ENCODE measurements at regions of chr17 and their contacts with region 1.

Region 1: GRCh38 chr17:49997791-49998703 is 3.0 kb upstream of the DLX3 start:
- DNase-seq: peak; percentile 89
- ATAC-seq: peak; percentile 85
- H3K4me3 Mint-ChIP-seq: no peak overlapping the region
- H3K27ac Mint-ChIP-seq: no peak overlapping the region
- H3K4me1 Mint-ChIP-seq: peaks cover 22% of the 10 kb centered on the region
- H3K27me3 Mint-ChIP-seq: peaks cover 71% of the 10 kb centered on the region
- CTCF ChIP-seq: peak; percentile 95

Region 2: DNA sequence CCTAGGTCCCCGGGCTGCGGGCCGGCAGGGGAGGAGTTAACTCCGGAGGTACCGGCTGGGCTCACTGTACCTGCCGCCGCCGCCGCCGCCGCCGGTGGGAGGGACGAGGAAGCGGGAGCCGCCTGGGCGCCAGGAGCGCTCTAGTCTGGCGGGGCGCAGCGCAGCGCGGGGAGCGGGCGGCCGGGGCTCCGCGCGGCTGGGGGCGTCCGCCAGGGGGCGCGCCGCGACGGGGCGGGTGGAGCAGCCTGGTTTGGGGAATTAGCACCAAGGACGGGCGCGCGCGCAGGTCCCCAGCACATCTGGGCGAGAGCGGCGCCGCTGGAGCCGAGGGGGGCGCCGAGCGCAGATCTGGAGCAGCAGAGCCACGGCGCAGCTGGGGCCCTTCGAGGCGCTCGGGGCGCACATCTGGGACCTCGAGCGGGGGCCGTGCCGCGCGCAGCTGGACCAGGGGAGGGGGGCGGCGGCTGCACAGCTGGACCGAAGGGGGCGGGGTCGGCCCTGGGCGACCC is 422.4 kb before region 1 on chr17 and contains the start of gene NXPH3:
- CTCF ChIA-PET with region 1: interaction called, 23 read pairs
- POLR2A ChIA-PET with region 1: no interaction called
- intact Hi-C with region 1: loop called (anchors 10 kb)
- DNase-seq: peak; percentile 75
- ATAC-seq: peak; percentile 87
- H3K4me3 Mint-ChIP-seq: peak within 1 kb of the TSS; percentile 68
- H3K27ac Mint-ChIP-seq: no peak within 1 kb of the TSS
- H3K4me1 Mint-ChIP-seq: peaks cover 21% of the 10 kb centered on the region
- H3K27me3 Mint-ChIP-seq: peaks cover 50% of the 10 kb centered on the region
- CTCF ChIP-seq: peak; percentile 77
- total RNA-seq, gene NXPH3: 0.20 to 0.29 TPM

Region 3: GRCh38 chr17:49730078-49730784 is 267.8 kb before region 1 on chr17:
- CTCF ChIA-PET with region 1: no interaction called
- POLR2A ChIA-PET with region 1: no interaction called
- intact Hi-C with region 1: no loop called
- DNase-seq: no peak
- ATAC-seq: no peak
- H3K4me3 Mint-ChIP-seq: no peak overlapping the region
- H3K27ac Mint-ChIP-seq: peak overlapping the region; percentile 35
- H3K4me1 Mint-ChIP-seq: peaks cover 49% of the 10 kb centered on the region
- H3K27me3 Mint-ChIP-seq: no peaks in the 10 kb centered on the region
- CTCF ChIP-seq: no peak

Region 4: DNA sequence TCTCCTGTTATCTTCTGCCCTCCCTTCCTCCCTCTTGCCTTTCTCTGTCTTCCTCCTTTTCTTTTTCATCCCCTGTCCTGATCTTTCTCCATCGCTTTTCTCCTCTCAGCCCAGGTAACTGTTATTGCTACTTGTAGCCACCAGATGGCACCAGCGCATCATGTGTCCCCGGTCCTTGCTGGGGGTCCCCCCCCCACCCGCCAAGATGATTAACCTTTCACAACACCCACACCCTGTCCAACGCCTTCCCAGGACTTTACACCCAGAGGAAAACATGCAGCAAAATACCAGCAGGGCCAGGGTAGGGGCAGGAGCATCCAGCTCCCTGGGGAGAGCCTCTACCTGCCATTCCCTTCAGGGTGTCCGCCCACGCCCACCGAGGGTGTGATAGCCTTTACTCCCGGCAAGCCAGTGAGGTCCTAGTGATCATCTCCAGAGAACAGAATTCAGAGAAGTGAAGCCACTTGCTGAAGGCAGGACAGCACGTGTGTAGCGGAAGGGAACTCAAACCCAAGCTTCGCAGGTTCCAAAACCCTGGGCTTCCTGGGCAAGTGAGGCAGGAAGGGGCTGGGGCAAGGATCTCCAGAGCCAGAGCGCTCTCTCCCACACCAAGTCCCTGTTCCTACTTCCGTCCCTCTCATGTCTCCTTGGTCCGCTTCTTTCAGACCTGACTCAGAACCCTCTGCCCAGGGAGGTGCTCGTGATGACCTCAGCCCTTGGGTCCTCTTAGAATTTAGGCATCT is 136.7 kb before region 1 on chr17:
- CTCF ChIA-PET with region 1: interaction called, 172 read pairs
- POLR2A ChIA-PET with region 1: interaction called, 3 read pairs
- intact Hi-C with region 1: loop called (anchors 5 kb)
- DNase-seq: peak; percentile 74
- ATAC-seq: peak; percentile 82
- H3K4me3 Mint-ChIP-seq: no peak overlapping the region
- H3K27ac Mint-ChIP-seq: no peak overlapping the region
- H3K4me1 Mint-ChIP-seq: peaks cover 5% of the 10 kb centered on the region
- H3K27me3 Mint-ChIP-seq: peaks cover 2% of the 10 kb centered on the region
- CTCF ChIP-seq: peak; percentile 97

Region 5: DNA sequence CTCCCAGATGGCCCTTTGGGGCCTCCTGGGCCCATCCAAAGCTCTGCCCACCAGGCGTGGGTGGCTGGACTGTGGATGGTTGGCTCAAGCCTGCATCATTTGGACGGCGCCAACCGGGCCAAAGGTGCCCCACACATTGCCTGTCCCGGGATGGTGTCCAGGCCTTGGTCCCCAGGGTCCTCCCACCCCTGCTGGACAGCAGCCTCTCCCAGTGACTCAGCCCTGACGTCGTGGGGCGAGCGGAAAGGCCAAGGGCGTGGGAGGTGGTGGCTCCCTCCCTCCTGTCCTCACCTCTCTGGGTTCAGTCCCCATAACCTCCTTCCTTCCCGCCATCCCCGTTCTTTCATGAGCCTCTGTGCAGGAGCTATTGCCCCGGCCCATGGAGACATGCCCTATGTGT is 71.2 kb before region 1 on chr17:
- CTCF ChIA-PET with region 1: interaction called, 16 read pairs
- POLR2A ChIA-PET with region 1: no interaction called
- intact Hi-C with region 1: no loop called
- DNase-seq: no peak
- ATAC-seq: no peak
- H3K4me3 Mint-ChIP-seq: no peak overlapping the region
- H3K27ac Mint-ChIP-seq: no peak overlapping the region
- H3K4me1 Mint-ChIP-seq: no peaks in the 10 kb centered on the region
- H3K27me3 Mint-ChIP-seq: peaks cover 8% of the 10 kb centered on the region
- CTCF ChIP-seq: no peak

Region 6: GRCh38 chr17:49964769-49965523 is 33.1 kb before region 1 on chr17:
- CTCF ChIA-PET with region 1: interaction called, 35 read pairs
- POLR2A ChIA-PET with region 1: no interaction called
- intact Hi-C with region 1: no loop called
- DNase-seq: peak; percentile 66
- ATAC-seq: peak; percentile 42
- H3K4me3 Mint-ChIP-seq: peak overlapping the region; percentile 56
- H3K27ac Mint-ChIP-seq: no peak overlapping the region
- H3K4me1 Mint-ChIP-seq: peaks cover 37% of the 10 kb centered on the region
- H3K27me3 Mint-ChIP-seq: peaks cover 62% of the 10 kb centered on the region
- CTCF ChIP-seq: no peak

Region 7: DNA sequence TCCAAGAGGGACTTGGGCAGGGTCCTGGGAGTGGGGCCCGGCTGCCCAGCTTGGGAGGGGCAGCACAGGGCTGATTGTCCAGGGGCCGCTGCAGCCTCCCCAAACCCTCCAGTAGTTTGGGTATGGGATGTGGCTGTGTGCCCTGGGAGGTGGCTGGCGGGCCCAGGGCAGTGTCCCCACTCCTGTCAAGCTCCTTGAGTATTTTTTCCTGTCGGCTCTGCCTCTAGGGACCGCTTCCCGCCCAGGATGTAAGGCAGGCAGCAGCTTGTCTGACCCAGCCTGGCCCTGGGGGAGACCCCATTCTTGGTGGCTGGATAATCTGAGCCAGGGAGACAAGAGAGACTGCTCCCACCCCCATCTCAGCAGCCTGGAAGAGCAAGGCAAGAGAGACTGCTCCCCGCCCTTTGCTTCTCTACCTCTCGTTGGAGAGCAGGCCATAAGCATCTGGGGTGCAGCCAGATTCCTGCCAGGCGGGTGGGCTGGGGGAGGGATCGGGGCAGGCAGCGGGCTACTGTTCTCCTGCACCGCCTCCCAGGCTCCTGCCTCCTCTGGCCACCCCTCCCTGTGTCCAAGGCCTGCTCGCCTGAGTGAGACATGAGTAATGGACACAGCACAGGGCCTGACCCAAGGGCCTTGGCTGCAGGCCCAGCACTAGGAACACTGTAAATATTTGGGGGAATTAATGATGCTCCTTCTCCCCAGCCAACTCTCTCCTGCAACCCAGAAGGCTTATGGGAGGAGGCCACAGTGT is 39.4 kb after region 1 on chr17:
- CTCF ChIA-PET with region 1: interaction called, 15 read pairs
- POLR2A ChIA-PET with region 1: no interaction called
- intact Hi-C with region 1: no loop called
- DNase-seq: no peak
- ATAC-seq: no peak
- H3K4me3 Mint-ChIP-seq: no peak overlapping the region
- H3K27ac Mint-ChIP-seq: no peak overlapping the region
- H3K4me1 Mint-ChIP-seq: no peaks in the 10 kb centered on the region
- H3K27me3 Mint-ChIP-seq: no peaks in the 10 kb centered on the region
- CTCF ChIP-seq: no peak